Activated CD4-positive, alpha-beta memory T cell treated with anti-CD3 and anti-CD28 coated beads, Interleukin-2, amount 10 ng/mL, durations not matched to agents 7 days and 5 days (primary cell): ENCODE measurements at regions of chr2 and their contacts with region 1.

Region 1: DNA sequence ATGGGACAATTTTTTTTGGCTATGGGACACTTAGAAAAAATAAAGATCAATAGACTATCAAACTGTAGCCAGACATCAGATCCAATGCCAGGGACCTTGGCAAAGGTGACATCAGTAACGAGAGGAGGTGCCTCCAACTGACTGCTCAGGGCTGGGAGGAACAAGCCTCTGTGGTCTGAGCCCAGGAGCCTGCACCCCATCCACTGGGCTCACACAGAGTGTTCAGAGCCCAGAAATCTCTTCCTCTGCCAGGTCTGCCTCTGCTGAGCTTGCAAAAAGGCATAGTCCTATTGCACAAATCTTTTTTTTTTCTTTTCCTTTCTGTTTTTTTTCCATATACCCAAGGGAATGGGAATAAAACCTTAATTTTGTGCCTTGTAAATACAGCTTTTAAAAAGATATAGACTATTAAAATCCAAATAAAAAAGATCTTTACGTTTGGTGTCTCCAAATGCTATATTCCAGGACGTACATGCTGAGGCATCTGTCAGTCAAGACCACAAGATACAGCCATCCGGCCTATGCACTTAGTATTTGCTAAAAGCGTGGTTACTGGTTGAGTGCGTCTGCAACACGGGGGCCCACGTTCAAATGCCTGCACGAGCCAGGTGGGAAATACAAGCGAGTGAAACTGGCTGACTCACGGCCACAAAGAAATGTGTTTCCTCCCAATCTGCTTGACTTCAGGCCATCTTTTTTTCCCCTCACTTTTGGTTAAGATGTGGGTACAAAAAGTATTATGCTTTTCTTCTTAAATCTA is 7.8 kb upstream of the ARHGAP25 start:
- DNase-seq: peak; percentile 89
- H3K4me3 Mint-ChIP-seq: peak overlapping the region; percentile 54
- H3K27ac Mint-ChIP-seq: peak overlapping the region; percentile 95
- H3K4me1 Mint-ChIP-seq: peaks cover 83% of the 10 kb centered on the region
- H3K27me3 Mint-ChIP-seq: no peaks in the 10 kb centered on the region

Region 2: DNA sequence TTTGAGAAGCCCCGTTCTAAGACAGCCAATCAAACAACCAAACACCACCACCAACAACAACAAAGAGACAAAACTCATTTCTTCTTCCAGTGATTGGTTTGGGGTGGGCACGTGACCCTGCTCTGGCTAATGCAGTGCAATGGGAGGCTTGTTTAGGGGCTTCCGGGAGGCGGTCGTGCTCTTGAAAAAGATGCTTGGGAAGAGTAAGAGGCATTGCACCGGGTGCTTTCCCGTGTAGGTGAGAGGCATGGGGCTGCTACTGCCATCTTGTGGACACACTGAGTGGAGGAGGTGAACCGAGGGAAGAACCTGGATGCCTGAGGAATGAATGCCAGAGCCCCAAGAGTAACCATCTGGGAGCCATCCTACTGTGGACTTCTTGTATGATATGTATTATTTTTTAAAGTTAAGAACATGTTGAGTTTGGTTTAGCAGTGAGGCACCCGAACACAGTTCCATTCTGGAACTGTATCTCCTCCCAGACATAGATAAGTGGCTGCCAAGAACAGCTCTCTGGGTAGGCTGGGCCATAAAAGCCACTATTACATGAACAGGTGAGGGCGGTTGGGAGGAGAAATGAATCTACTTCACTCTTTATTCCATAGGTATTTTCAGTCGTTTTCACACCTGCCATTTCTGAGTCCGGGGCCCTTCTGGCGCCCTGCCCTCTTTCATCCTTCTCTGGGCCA is 11.3 kb before region 1 on chr2:
- CTCF ChIA-PET with region 1: interaction called, 33 read pairs
- POLR2A ChIA-PET with region 1: interaction called, 24 read pairs
- DNase-seq: peak; percentile 58
- H3K4me3 Mint-ChIP-seq: no peak overlapping the region
- H3K27ac Mint-ChIP-seq: peak overlapping the region; percentile 89
- H3K4me1 Mint-ChIP-seq: peaks cover 85% of the 10 kb centered on the region
- H3K27me3 Mint-ChIP-seq: peaks cover 1% of the 10 kb centered on the region